Naive thymus-derived CD8-positive, alpha-beta T cell (primary cell): ENCODE measurements at regions of chr20 and their contacts with region 1.

Region 1: GRCh38 chr20:44475694-44476560 is at the start of gene TTPAL:
- DNase-seq: peak; percentile 80 to 91 (median 86)
- ATAC-seq: peak; percentile 94 to 96
- H3K4me3 Mint-ChIP-seq: peak within 1 kb of the TSS; percentile 89 to 98 (median 92)
- H3K27ac Mint-ChIP-seq: peak within 1 kb of the TSS; percentile 91 to 99 (median 96)
- H3K4me1 Mint-ChIP-seq: peaks cover 13 to 33% (median 30%) of the 10 kb centered on the region in 4 donors
- H3K27me3 Mint-ChIP-seq: no peaks in the 10 kb centered on the region
- polyA plus RNA-seq, gene TTPAL: 10.5 to 15.3 (median 15.3) TPM

Region 2: GRCh38 chr20:44521484-44522481 is 45.9 kb after region 1 on chr20 and contains the start of gene SERINC3:
- POLR2A ChIA-PET with region 1: interaction called, 12 read pairs
- DNase-seq: peak; percentile 95 to 99 (median 98)
- ATAC-seq: peak; percentile 89 to 97
- H3K4me3 Mint-ChIP-seq: peak within 1 kb of the TSS; percentile 83 to 92 (median 90)
- H3K27ac Mint-ChIP-seq: peak within 1 kb of the TSS; percentile 86 to 99 (median 96)
- H3K4me1 Mint-ChIP-seq: peaks cover 24 to 65% (median 59%) of the 10 kb centered on the region in 4 donors
- H3K27me3 Mint-ChIP-seq: no peaks in the 10 kb centered on the region
- polyA plus RNA-seq, gene SERINC3: 163 to 207 (median 173) TPM